ENCODE measurements at regions of chr16 and their contacts with region 1.

Region 1: DNA sequence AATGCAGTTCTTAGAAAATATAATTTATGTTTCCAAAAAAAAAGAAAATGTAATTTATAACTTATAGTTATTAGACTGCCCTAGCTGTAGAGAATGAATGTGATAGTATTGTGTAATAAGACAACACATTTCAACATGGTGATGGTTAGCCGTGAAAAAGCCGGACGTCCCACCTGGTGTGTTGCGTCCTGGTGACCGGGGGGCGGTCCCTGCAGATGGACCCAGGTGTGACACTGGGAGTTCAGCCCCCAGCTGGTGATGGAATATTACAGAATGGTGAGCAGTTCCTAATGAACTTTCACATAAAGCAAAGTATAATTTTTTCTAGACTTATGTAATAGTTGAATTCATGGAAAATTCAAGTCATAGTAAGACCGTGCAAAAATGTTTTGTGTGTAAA is 132.8 kb downstream of the LAT start:
- DNase-seq: no peak
- ATAC-seq: no peak

Region 2: GRCh38 chr16:29182501-29182900 is 64.9 kb after region 1 on chr16:
- intact Hi-C with region 1: loop called (anchors 5 kb)
- DNase-seq: no peak
- ATAC-seq: peak; percentile 9

Region 3: GRCh38 chr16:29226782-29227181 is 109.2 kb after region 1 on chr16:
- intact Hi-C with region 1: no loop called
- DNase-seq: no peak
- ATAC-seq: no peak

Region 4: DNA sequence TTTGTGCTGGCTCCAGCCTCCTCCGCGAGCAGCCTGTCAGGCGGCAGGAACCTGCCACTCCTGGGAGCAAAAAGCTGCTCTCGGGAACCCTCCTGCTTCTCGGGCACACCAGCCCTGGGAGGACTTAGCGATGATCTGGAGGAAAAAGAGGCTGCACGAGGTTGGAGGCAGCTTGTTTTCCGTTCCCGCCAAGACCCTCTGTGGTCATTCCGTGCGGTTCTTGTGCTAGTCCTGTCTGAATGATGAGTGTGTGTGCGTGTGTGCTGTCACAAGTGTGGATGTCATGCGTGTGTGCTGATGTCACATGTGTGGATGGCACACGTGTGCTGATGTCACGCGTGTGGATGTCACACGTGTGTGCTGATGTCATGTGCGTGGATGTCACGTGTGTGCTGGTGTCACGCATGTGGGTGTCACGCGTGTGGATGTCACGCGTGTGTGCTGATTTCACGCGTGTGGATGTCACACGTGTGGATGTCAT is 138.9 kb after region 1 on chr16:
- intact Hi-C with region 1: loop called (anchors 5 kb)
- DNase-seq: no peak
- ATAC-seq: no peak